ENCODE measurements at regions of chr10 and their contacts with region 1.

Region 1: GRCh38 chr10:95246579-95247051 is 44.2 kb downstream of the PDLIM1 start:
- DNase-seq: peak; percentile 78
- H3K4me3 Mint-ChIP-seq: no peak overlapping the region
- H3K27ac Mint-ChIP-seq: no peak overlapping the region
- H3K4me1 Mint-ChIP-seq: peaks cover 27% of the 10 kb centered on the region
- H3K27me3 Mint-ChIP-seq: no peaks in the 10 kb centered on the region
- CTCF ChIP-seq: peak; percentile 81

Region 2: GRCh38 chr10:95183271-95184230 is 63.1 kb before region 1 on chr10:
- CTCF ChIA-PET with region 1: interaction called, 44 read pairs
- POLR2A ChIA-PET with region 1: no interaction called
- intact Hi-C with region 1: loop called (anchors 1 kb)
- DNase-seq: peak; percentile 80
- H3K4me3 Mint-ChIP-seq: peak overlapping the region; percentile 73
- H3K27ac Mint-ChIP-seq: no peak overlapping the region
- H3K4me1 Mint-ChIP-seq: peaks cover 6% of the 10 kb centered on the region
- H3K27me3 Mint-ChIP-seq: peaks cover 13% of the 10 kb centered on the region
- CTCF ChIP-seq: peak; percentile 96

Region 3: DNA sequence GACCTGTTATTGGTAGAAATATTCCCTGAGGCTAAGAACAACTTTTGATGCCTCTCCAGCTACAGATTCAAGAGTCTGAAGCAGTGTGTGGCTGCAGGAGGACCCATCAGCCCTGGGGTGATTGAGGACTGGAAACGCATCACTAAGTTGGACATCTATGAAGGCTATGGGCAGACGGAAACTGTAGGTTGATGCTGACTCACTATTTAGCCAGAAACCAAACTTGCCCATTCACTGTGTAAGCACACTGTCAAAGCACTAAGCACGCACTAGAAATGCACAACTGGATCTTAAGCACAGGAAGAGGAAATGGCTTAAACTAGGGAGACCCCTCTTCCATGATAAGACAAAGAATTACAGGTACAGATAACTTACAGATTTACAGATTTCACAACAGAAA is 31.8 kb before region 1 on chr10:
- CTCF ChIA-PET with region 1: interaction called, 46 read pairs
- POLR2A ChIA-PET with region 1: no interaction called
- intact Hi-C with region 1: no loop called
- DNase-seq: peak; percentile 43
- H3K4me3 Mint-ChIP-seq: no peak overlapping the region
- H3K27ac Mint-ChIP-seq: no peak overlapping the region
- H3K4me1 Mint-ChIP-seq: peaks cover 21% of the 10 kb centered on the region
- H3K27me3 Mint-ChIP-seq: no peaks in the 10 kb centered on the region
- CTCF ChIP-seq: no peak

Region 4: DNA sequence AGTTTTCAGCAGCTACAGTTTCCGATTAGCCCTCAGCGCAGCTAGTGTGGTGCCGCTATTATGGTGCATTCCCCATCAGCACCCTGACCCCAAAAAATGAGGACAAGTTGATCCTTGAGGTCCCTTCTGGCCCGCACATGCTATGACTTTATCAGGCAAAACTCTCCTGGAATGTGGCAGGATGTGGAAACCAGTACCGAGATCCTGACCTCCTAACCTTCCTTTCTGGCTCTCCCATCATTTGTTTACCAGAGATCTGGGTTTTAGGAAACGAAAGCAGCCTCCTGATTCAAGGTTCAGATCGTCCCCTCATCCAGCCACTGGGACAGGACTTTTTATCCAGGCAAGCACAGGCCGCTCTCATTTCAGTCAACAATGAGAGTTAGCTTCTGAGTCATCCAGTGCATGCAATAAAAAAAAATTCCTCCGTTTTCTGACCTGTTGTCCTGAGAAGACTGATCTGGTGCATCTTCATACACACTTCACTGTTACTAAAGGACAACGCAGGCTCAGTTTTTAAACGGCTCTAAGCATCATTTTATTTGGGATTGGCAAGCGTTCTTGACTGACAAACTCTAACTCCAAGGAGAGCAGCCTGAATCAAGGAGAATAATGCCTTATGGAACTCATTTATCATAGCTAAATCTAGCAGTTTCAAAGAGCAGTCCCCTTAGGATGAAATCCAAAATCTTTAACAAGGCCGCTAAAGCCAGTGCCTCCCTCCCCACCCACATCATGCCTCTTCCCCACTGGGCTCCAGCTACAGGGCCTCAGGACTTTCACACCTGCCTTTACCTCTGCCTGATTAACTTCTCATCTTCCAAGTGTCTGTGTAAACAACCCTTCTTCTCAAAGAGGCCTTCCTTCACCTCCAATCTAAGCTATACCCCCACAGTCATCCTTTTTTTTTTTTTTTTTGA is 27.0 kb after region 1 on chr10:
- CTCF ChIA-PET with region 1: interaction called, 23 read pairs
- POLR2A ChIA-PET with region 1: interaction called, 5 read pairs
- intact Hi-C with region 1: no loop called
- DNase-seq: peak; percentile 82
- H3K4me3 Mint-ChIP-seq: peak overlapping the region; percentile 61
- H3K27ac Mint-ChIP-seq: peak overlapping the region; percentile 97
- H3K4me1 Mint-ChIP-seq: peaks cover 40% of the 10 kb centered on the region
- H3K27me3 Mint-ChIP-seq: no peaks in the 10 kb centered on the region
- CTCF ChIP-seq: no peak

Region 5: DNA sequence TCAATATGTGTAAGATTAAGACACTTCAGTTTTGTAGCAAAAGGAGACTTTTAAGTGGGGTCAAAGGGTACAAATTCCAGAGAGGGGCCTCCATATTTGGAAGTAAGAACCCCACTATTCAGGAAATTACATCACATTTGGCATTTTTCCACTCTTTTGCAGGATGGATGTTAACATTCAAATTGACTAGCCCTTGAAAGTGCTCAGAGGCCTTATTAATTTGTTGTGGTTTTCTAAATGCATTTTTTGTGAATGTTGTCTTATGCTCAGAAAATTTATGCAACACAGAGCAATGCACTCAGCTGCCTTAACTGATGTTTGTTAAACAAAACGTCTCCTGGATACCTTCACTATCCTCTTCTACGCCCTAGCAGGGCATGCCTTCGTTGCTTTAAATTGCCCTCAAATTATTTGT is 95.1 kb after region 1 on chr10:
- CTCF ChIA-PET with region 1: interaction called, 713 read pairs
- POLR2A ChIA-PET with region 1: no interaction called
- intact Hi-C with region 1: no loop called
- DNase-seq: no peak
- H3K4me3 Mint-ChIP-seq: no peak overlapping the region
- H3K27ac Mint-ChIP-seq: no peak overlapping the region
- H3K4me1 Mint-ChIP-seq: peaks cover under 1% of the 10 kb centered on the region
- H3K27me3 Mint-ChIP-seq: no peaks in the 10 kb centered on the region
- CTCF ChIP-seq: no peak

Measured in MCF 10A (cell line).